ENCODE measurements at regions of chr4 and their contacts with region 1.

Region 1: GRCh38 chr4:82648356-82648755 is 86.6 kb upstream of the TMEM150C start:
- DNase-seq: no peak
- ATAC-seq: no peak
- H3K4me3 Mint-ChIP-seq: no peak overlapping the region
- H3K27ac Mint-ChIP-seq: no peak overlapping the region
- H3K4me1 Mint-ChIP-seq: no peaks in the 10 kb centered on the region
- H3K27me3 Mint-ChIP-seq: peaks cover 3% of the 10 kb centered on the region
- CTCF ChIP-seq: no peak

Region 2: GRCh38 chr4:82667761-82668505 is 19.6 kb after region 1 on chr4:
- CTCF ChIA-PET with region 1: no interaction called
- POLR2A ChIA-PET with region 1: no interaction called
- intact Hi-C with region 1: loop called (anchors 1 kb)
- DNase-seq: no peak
- ATAC-seq: no peak
- H3K4me3 Mint-ChIP-seq: no peak overlapping the region
- H3K27ac Mint-ChIP-seq: no peak overlapping the region
- H3K4me1 Mint-ChIP-seq: no peaks in the 10 kb centered on the region
- H3K27me3 Mint-ChIP-seq: peaks cover 3% of the 10 kb centered on the region
- CTCF ChIP-seq: no peak

Region 3: DNA sequence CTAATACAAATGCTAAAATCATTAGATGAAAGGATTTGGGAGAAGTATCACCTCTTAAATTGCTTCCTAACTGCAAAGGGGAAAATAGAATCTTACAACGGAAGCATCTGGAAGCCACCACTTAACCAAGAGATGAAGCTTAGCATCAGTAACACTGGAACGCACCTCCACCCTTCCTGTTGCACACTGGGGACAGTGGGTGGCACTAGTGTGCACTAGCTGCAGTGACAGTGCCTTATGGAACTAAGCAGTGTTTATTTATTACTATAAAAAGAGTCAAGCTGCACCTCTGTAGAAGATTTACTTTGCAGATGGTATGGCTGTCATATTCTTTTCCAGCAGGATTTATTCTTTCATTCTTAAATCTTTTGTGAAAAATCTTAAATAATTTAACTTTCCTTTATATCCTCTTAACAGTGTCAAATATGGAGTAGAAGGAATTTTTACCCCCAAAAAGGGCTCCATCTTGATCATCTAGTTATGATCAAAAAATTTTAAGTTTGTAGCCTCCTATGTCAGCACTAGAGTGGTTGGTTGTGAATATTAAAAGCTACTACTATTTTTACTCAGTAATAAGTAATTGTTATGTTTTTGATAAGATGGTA is 73.6 kb after region 1 on chr4:
- CTCF ChIA-PET with region 1: no interaction called
- POLR2A ChIA-PET with region 1: no interaction called
- intact Hi-C with region 1: no loop called
- DNase-seq: peak; percentile 48
- ATAC-seq: peak; percentile 75
- H3K4me3 Mint-ChIP-seq: no peak overlapping the region
- H3K27ac Mint-ChIP-seq: no peak overlapping the region
- H3K4me1 Mint-ChIP-seq: no peaks in the 10 kb centered on the region
- H3K27me3 Mint-ChIP-seq: no peaks in the 10 kb centered on the region
- CTCF ChIP-seq: peak; percentile 49

Region 4: DNA sequence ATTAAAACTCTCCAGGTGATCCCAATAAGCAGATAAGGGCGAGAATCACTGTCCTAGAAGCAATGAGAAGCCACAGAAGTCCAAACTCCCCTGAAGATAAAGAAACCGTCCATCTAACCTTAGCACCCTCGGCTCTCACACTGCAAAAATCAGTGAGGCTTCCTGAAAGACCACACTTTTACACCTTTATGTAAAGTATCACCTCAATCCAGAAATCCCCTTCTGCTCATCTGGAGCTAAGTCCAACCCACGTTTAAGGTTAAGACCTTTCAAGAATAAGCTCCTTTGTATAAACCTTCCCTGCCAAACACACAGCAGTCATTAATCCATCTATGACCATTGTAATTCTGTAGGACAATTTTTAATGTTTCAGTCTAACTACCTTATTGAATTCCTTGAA is 320.6 kb after region 1 on chr4:
- CTCF ChIA-PET with region 1: no interaction called
- POLR2A ChIA-PET with region 1: no interaction called
- intact Hi-C with region 1: no loop called
- DNase-seq: no peak
- ATAC-seq: no peak
- H3K4me3 Mint-ChIP-seq: no peak overlapping the region
- H3K27ac Mint-ChIP-seq: peak overlapping the region; percentile 43
- H3K4me1 Mint-ChIP-seq: peaks cover 4% of the 10 kb centered on the region
- H3K27me3 Mint-ChIP-seq: no peaks in the 10 kb centered on the region
- CTCF ChIP-seq: no peak